Stomach (tissue), 19 donors: ENCODE measurements at regions of chr14 and their contacts with region 1.

Region 1: DNA sequence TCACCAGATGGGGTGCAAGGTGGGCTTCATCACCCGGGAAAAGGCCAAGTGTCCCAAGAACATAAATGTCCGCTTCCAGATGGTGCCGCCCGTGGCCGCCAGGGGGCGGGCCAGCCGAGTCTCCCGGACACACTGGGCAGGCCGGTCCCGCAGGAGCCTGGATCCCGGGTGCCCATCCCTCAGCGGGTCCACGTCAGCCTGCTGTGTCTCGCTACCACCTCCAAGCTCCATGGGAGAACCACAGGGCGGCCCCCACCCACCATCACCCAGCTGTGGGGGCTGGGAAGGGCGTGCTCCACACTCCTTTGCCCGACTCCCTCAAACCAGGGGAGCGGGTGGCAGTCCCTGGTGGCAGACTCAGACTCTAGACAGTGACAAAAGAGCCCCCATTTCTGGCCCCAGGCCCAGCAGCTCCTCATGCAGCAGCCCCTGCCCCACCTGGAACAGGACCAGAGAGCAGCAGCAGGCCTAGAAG is 22.0 kb upstream of the NUDT14 start:
- DNase-seq: peak; percentile 85 to 89
- H3K4me3 ChIP-seq: no peak overlapping the region
- H3K27ac ChIP-seq: no peak overlapping the region
- H3K4me1 ChIP-seq: peaks cover 31 to 66% (median 58%) of the 10 kb centered on the region in 4 donors
- H3K27me3 ChIP-seq: peaks cover 4 to 51% (median 34%) of the 10 kb centered on the region in 3 donors
- CTCF ChIP-seq: peak in 6 of 7 experiments; percentile 85 to 97 (median 91)
- EP300 ChIP-seq: no peak
- POLR2A ChIP-seq: no peak

Region 2: GRCh38 chr14:105161964-105162668 is 41.0 kb before region 1 on chr14:
- intact Hi-C with region 1: no loop called
- DNase-seq: no peak
- H3K4me3 ChIP-seq: no peak overlapping the region
- H3K27ac ChIP-seq: no peak overlapping the region
- H3K4me1 ChIP-seq: peaks cover 2 to 19% (median 14%) of the 10 kb centered on the region in 4 donors
- H3K27me3 ChIP-seq: peaks cover 0 to 38% (median 9%) of the 10 kb centered on the region in 3 donors
- CTCF ChIP-seq: no peak
- EP300 ChIP-seq: no peak
- POLR2A ChIP-seq: no peak

Region 3: GRCh38 chr14:105281371-105282097 is 78.4 kb after region 1 on chr14:
- intact Hi-C with region 1: loop called (anchors 10 kb)
- DNase-seq: peak in 1 of 2 donors; percentile 87
- H3K4me3 ChIP-seq: no peak overlapping the region
- H3K27ac ChIP-seq: no peak overlapping the region
- H3K4me1 ChIP-seq: peaks cover 11 to 44% (median 30%) of the 10 kb centered on the region in 4 donors
- H3K27me3 ChIP-seq: no peaks in the 10 kb centered on the region
- CTCF ChIP-seq: peak in 4 of 7 experiments; percentile 30 to 55 (median 50)
- EP300 ChIP-seq: no peak
- POLR2A ChIP-seq: no peak

Region 4: GRCh38 chr14:105312973-105313750 is 110.1 kb after region 1 on chr14:
- intact Hi-C with region 1: no loop called
- DNase-seq: peak in 1 of 2 donors; percentile 50
- H3K4me3 ChIP-seq: peak overlapping the region; percentile 73 to 84 (median 80)
- H3K27ac ChIP-seq: peak overlapping the region; percentile 8 to 98 (median 96)
- H3K4me1 ChIP-seq: peaks cover 39 to 58% (median 44%) of the 10 kb centered on the region in 4 donors
- H3K27me3 ChIP-seq: no peaks in the 10 kb centered on the region
- CTCF ChIP-seq: no peak
- EP300 ChIP-seq: no peak
- POLR2A ChIP-seq: no peak

Region 5: GRCh38 chr14:105351920-105352851 is 149.1 kb after region 1 on chr14:
- intact Hi-C with region 1: loop called (anchors 5 kb)
- DNase-seq: peak; percentile 88 to 96
- H3K4me3 ChIP-seq: no peak overlapping the region
- H3K27ac ChIP-seq: peak overlapping the region in 4 of 5 donors; percentile 40 to 63 (median 58)
- H3K4me1 ChIP-seq: peaks cover 0 to 12% (median 8%) of the 10 kb centered on the region in 4 donors
- H3K27me3 ChIP-seq: no peaks in the 10 kb centered on the region
- CTCF ChIP-seq: peak in 5 of 7 experiments; percentile 76 to 93 (median 88)
- EP300 ChIP-seq: no peak
- POLR2A ChIP-seq: no peak